Motor neuron (in vitro differentiated cells): ENCODE measurements at regions of chr22 and their contacts with region 1.

Region 1: GRCh38 chr22:40856513-40857308 is at the starts of genes ST13 and XPNPEP3:
- ATAC-seq: peak; percentile 86 to 94 (median 92)
- H3K4me3 ChIP-seq: peak within 1 kb of the TSS; percentile 65 to 95 (median 88)
- H3K27ac ChIP-seq: peak within 1 kb of the TSS; percentile 100
- H3K4me1 ChIP-seq: peaks cover 0 to 39% of the 10 kb centered on the region in 2 donors
- total RNA-seq, gene ST13: 195 to 321 (median 222) TPM
- total RNA-seq, gene XPNPEP3: 10.8 to 28.1 (median 16.9) TPM

Region 2: DNA sequence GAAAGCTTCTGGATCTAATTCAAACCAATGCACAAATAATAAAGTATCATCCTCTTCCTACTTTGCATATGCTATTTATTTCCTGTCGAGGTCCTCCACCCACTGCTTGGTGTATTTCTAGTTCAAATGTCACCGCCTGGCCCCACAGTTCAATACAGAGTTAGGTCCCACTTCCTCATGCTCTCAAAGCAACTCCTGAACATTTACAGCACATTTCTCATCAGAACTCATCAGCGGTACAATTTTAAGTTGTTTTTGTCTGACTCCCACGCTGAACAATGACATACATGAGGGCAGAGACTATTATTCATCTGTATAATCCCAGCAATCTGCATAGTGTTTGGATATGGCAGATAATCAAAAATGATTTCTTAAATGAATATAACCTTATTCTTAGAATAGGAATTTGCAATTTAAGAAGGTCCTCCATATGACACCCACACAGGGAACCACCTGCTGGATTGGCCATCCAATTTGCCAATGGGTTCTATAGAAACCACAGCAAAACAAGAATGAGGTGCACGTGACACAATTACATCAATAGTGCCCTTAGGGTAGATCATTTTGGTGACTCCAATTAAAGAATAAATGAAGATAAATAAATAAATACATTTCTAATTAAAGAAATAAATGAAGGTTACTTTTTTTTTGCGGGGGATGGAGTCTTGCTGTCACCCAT is 91.8 kb before region 1 on chr22:
- in situ Hi-C with region 1: loop called in 1 of 9 experiments (anchors 25 kb)
- ATAC-seq: peak in 3 of 8 experiments; percentile 90 to 92 (median 92)
- H3K4me3 ChIP-seq: no peak overlapping the region
- H3K27ac ChIP-seq: no peak overlapping the region
- H3K4me1 ChIP-seq: peaks cover 0 to 4% of the 10 kb centered on the region in 2 donors